OCI-LY7 (cell line): ENCODE measurements at regions of chr11 and their contacts with region 1.

Region 1: DNA sequence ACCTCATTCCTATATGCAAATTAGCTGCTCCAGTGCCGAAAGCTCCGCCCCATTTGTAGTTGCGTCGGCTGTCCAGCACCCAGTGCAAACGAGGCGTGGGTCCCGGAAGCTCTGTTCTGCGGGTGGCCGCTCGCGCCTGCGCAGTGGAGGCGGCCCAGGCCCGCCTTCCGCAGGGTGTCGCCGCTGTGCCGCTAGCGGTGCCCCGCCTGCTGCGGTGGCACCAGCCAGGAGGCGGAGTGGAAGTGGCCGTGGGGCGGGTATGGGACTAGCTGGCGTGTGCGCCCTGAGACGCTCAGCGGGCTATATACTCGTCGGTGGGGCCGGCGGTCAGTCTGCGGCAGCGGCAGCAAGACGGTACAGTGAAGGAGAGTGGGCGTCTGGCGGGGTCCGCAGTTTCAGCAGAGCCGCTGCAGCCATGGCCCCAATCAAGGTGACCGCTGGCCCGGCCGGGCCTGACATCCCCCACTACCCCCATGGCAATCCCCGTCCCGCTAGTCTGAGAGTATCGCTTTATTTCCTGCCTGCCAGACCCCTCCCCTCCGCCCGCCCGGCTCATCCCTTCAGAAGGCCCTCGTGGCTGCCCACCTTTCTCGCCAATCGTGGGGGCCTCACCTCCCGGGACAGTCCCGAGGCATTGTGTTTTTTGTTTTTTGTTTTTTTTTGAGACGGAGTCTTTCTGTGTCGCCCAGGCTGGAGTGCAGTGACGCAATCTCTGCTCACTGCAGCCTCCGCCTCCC is at the start of gene PRDX5:
- DNase-seq: peak; percentile 98
- H3K4me3 ChIP-seq: peak within 1 kb of the TSS; percentile 83
- H3K27ac ChIP-seq: peak within 1 kb of the TSS; percentile 88
- H3K4me1 ChIP-seq: peaks cover 29% of the 10 kb centered on the region
- CTCF ChIP-seq: peak; percentile 70
- total RNA-seq, gene PRDX5: 177 and 200 TPM in 2 replicates

Region 2: GRCh38 chr11:63762654-63763495 is 555.2 kb before region 1 on chr11:
- CTCF ChIA-PET with region 1: no interaction called
- POLR2A ChIA-PET with region 1: no interaction called
- intact Hi-C with region 1: no loop called
- DNase-seq: no peak
- H3K4me3 ChIP-seq: no peak overlapping the region
- H3K27ac ChIP-seq: no peak overlapping the region
- H3K4me1 ChIP-seq: peaks cover 13% of the 10 kb centered on the region
- CTCF ChIP-seq: no peak

Region 3: GRCh38 chr11:64240394-64241174 is 77.5 kb before region 1 on chr11 and contains the start of gene FKBP2:
- CTCF ChIA-PET with region 1: interaction called, 3 read pairs
- POLR2A ChIA-PET with region 1: interaction called, 10 read pairs
- intact Hi-C with region 1: no loop called
- DNase-seq: peak; percentile 98
- H3K4me3 ChIP-seq: peak within 1 kb of the TSS; percentile 81
- H3K27ac ChIP-seq: peak within 1 kb of the TSS; percentile 91
- H3K4me1 ChIP-seq: peaks cover 50% of the 10 kb centered on the region
- CTCF ChIP-seq: no peak
- total RNA-seq, gene FKBP2: 57.3 and 70.6 TPM in 2 replicates

Region 4: GRCh38 chr11:64331557-64332371 is 13.6 kb after region 1 on chr11:
- CTCF ChIA-PET with region 1: interaction called, 9 read pairs
- POLR2A ChIA-PET with region 1: interaction called, 14 read pairs
- intact Hi-C with region 1: loop called (anchors 1 kb)
- DNase-seq: peak; percentile 57
- H3K4me3 ChIP-seq: no peak overlapping the region
- H3K27ac ChIP-seq: no peak overlapping the region
- H3K4me1 ChIP-seq: peaks cover 31% of the 10 kb centered on the region
- CTCF ChIP-seq: peak; percentile 72

Region 5: GRCh38 chr11:64341851-64342791 is 24.0 kb after region 1 on chr11:
- CTCF ChIA-PET with region 1: interaction called, 12 read pairs
- POLR2A ChIA-PET with region 1: interaction called, 22 read pairs
- intact Hi-C with region 1: loop called (anchors 2 kb)
- DNase-seq: peak; percentile 91
- H3K4me3 ChIP-seq: peak overlapping the region; percentile 50
- H3K27ac ChIP-seq: no peak overlapping the region
- H3K4me1 ChIP-seq: peaks cover 40% of the 10 kb centered on the region
- CTCF ChIP-seq: peak; percentile 65

Region 6: GRCh38 chr11:64355078-64355940 is 37.2 kb after region 1 on chr11:
- CTCF ChIA-PET with region 1: interaction called, 33 read pairs
- POLR2A ChIA-PET with region 1: interaction called, 17 read pairs
- intact Hi-C with region 1: loop called (anchors 1 kb)
- DNase-seq: peak; percentile 86
- H3K4me3 ChIP-seq: no peak overlapping the region
- H3K27ac ChIP-seq: peak overlapping the region; percentile 29
- H3K4me1 ChIP-seq: peaks cover 44% of the 10 kb centered on the region
- CTCF ChIP-seq: peak; percentile 93

Region 7: DNA sequence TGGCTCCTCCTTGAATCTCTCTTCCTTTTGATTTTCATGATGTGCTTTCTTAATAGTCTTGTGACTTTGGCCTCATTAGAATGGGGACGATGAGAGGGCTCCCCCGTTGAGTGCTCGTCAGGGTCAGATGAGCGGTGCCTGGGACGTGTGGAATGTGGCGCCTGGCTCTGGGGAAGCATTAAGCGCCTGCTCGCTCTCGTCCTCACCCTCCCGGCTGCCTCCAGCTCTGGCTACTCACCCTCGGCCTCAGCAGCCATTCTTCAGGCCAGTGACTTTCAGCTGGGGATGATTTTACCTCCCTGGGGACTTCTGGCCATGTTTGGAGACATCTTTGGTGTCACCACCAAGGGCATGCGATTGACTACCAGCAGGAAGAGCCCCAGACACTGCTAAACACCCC is 110.6 kb after region 1 on chr11:
- CTCF ChIA-PET with region 1: no interaction called
- POLR2A ChIA-PET with region 1: no interaction called
- intact Hi-C with region 1: no loop called
- DNase-seq: no peak
- H3K4me3 ChIP-seq: no peak overlapping the region
- H3K27ac ChIP-seq: no peak overlapping the region
- H3K4me1 ChIP-seq: no peaks in the 10 kb centered on the region
- CTCF ChIP-seq: no peak